ENCODE measurements at regions of chr2 and their contacts with region 1.

Region 1: DNA sequence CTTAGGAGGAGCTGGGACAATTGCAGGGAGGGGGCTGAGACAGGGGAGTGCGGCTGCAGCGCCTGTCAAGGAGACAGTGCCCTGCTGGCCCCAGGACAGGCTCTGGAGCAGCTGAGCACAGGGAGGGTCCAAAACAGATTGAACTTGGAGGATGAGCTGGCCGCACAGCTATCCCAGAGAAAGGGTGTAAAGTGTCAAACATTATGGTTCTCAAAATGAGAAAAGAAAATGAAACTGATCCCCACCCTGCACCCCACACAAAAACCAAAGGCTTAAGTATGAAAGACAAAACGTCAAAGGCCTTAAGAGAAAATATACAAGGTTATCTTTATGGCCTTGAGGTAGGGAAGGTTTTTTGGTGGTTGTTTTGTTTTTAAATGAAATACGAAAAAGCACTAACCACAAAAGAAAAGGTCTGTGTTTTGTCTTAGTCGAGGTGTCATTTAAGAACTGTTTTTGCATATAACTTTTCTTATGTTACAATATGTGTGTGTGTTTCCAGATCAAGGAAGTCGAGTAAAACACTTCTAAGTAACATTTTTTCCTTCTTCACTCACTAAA is 111.8 kb downstream of the HDAC4 start:
- DNase-seq: peak in 2 of 5 donors; percentile 42 to 46
- ATAC-seq: peak in 3 of 4 donors; percentile 25 to 37 (median 35)
- H3K4me3 ChIP-seq: peak overlapping the region in 1 of 12 donors; percentile 3
- H3K27ac ChIP-seq: peak overlapping the region; percentile 18 to 83 (median 52)
- H3K4me1 ChIP-seq: peaks cover 0 to 93% (median 73%) of the 10 kb centered on the region in 12 donors
- H3K27me3 ChIP-seq: no peaks in the 10 kb centered on the region
- CTCF ChIP-seq: no peak
- POLR2A ChIP-seq: no peak

Region 2: GRCh38 chr2:239151201-239152131 is 137.6 kb before region 1 on chr2:
- intact Hi-C with region 1: loop called in 1 of 10 experiments (anchors 5 kb)
- DNase-seq: peak in 2 of 5 donors; percentile 13 to 33
- ATAC-seq: peak; percentile 33 to 75 (median 53)
- H3K4me3 ChIP-seq: no peak overlapping the region
- H3K27ac ChIP-seq: peak overlapping the region in 7 of 12 donors; percentile 5 to 73 (median 36)
- H3K4me1 ChIP-seq: peaks cover 0 to 19% (median 10%) of the 10 kb centered on the region in 12 donors
- H3K27me3 ChIP-seq: no peaks in the 10 kb centered on the region
- CTCF ChIP-seq: no peak
- POLR2A ChIP-seq: no peak

Region 3: GRCh38 chr2:239223310-239224198 is 65.5 kb before region 1 on chr2:
- intact Hi-C with region 1: loop called in 1 of 10 experiments (anchors 5 kb)
- DNase-seq: peak in 2 of 5 donors; percentile 48 to 49
- ATAC-seq: peak in 3 of 4 donors; percentile 23 to 43 (median 32)
- H3K4me3 ChIP-seq: peak overlapping the region in 1 of 12 donors; percentile 12
- H3K27ac ChIP-seq: peak overlapping the region in 11 of 12 donors; percentile 79 to 93 (median 83)
- H3K4me1 ChIP-seq: peaks cover 12 to 87% (median 71%) of the 10 kb centered on the region in 12 donors
- H3K27me3 ChIP-seq: no peaks in the 10 kb centered on the region
- CTCF ChIP-seq: no peak
- POLR2A ChIP-seq: no peak

Region 4: GRCh38 chr2:239326831-239327535 is 38.0 kb after region 1 on chr2:
- intact Hi-C with region 1: loop called in 1 of 10 experiments (anchors 5 kb)
- DNase-seq: peak in 1 of 5 donors; percentile 16
- ATAC-seq: no peak
- H3K4me3 ChIP-seq: no peak overlapping the region
- H3K27ac ChIP-seq: peak overlapping the region in 11 of 12 donors; percentile 80 to 99 (median 91)
- H3K4me1 ChIP-seq: peaks cover 0 to 72% (median 53%) of the 10 kb centered on the region in 12 donors
- H3K27me3 ChIP-seq: no peaks in the 10 kb centered on the region
- CTCF ChIP-seq: no peak
- POLR2A ChIP-seq: no peak

Region 5: GRCh38 chr2:239361311-239361642 is 72.2 kb after region 1 on chr2:
- intact Hi-C with region 1: no loop called
- DNase-seq: no peak
- ATAC-seq: no peak
- H3K4me3 ChIP-seq: no peak overlapping the region
- H3K27ac ChIP-seq: peak overlapping the region in 1 of 12 donors; percentile 92
- H3K4me1 ChIP-seq: peaks cover 0 to 41% (median 8%) of the 10 kb centered on the region in 12 donors
- H3K27me3 ChIP-seq: no peaks in the 10 kb centered on the region
- CTCF ChIP-seq: peak in 5 of 12 donors; percentile 10 to 32 (median 20)
- POLR2A ChIP-seq: no peak